ENCODE measurements at regions of chr7 and their contacts with region 1.

Region 1: DNA sequence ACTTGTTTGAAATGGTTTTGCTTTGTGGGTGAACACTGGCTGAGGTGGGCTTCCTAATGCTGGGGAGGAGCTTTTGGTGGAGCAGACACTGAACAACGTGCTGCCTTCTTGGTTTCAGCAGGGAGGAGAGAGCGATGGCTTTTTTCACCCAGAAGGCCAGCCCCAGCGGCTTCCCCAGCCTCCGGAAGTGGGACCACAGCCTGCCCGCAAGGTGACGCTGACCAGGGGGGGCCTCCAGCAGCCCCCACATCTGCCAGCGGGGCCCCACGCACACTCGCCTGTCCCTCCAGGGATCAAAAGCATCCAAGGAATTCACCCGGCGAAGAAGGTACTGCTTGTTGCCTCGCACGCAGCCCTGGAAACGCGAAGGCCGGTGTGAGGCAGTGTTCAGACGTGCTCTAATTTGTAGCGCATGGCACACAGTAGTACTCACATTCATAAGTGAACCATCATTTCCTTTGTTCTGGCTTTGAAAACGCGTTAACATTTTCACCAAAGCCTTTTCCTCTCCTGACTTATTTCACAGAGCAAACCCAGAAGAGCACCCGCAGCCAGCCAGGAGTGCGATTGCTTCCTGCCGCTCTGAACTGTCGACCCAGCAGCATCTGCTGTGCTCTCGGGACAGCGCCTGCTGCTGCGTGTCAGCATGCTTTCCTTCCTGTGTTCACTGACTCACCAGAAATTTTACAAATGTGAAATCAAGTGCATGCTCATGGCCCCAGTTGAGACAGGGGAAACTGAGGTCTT is 48.4 kb downstream of the SHH start:
- DNase-seq: no peak
- ATAC-seq: no peak
- H3K4me3 ChIP-seq: no peak overlapping the region
- H3K27ac ChIP-seq: no peak overlapping the region
- H3K4me1 ChIP-seq: no peaks in the 10 kb centered on the region
- H3K27me3 ChIP-seq: no peaks in the 10 kb centered on the region
- CTCF ChIP-seq: no peak

Region 2: DNA sequence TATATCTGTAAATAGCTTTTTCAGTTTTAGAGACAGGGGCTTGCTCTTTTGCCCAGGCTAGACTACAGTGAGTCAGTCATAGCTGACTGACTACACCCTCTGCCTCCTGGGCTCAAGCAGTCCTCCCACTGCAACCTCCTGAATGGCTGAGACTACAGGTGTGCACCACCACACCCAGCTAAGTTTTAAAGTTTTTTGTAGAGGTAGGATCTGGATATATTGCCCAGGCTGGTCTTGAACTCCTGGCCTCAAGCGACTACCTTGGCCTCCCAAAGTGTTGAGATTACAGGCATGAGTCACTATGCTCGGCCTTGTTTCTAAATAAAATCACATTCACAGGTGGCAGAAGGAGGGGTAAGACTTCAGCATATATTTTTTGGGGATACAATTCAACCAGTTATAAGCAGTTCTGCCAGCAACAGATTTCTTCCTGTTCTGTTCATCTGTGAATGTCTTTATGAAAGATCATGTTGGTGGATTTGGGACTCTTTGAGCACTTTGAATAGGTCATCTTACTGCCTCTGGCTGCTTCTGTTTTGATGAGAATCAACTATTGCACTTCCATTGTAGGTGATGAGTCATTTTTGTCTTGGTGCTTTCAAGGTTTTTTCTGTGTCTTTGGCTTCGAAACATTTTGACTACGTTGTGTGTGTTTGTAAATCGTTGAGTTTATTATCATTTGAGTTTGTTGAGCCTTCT is 103.7 kb before region 1 on chr7:
- CTCF ChIA-PET with region 1: no interaction called
- POLR2A ChIA-PET with region 1: no interaction called
- intact Hi-C with region 1: no loop called
- DNase-seq: no peak
- ATAC-seq: no peak
- H3K4me3 ChIP-seq: no peak overlapping the region
- H3K27ac ChIP-seq: no peak overlapping the region
- H3K4me1 ChIP-seq: peaks cover 7% of the 10 kb centered on the region
- H3K27me3 ChIP-seq: no peaks in the 10 kb centered on the region
- CTCF ChIP-seq: no peak

Region 3: DNA sequence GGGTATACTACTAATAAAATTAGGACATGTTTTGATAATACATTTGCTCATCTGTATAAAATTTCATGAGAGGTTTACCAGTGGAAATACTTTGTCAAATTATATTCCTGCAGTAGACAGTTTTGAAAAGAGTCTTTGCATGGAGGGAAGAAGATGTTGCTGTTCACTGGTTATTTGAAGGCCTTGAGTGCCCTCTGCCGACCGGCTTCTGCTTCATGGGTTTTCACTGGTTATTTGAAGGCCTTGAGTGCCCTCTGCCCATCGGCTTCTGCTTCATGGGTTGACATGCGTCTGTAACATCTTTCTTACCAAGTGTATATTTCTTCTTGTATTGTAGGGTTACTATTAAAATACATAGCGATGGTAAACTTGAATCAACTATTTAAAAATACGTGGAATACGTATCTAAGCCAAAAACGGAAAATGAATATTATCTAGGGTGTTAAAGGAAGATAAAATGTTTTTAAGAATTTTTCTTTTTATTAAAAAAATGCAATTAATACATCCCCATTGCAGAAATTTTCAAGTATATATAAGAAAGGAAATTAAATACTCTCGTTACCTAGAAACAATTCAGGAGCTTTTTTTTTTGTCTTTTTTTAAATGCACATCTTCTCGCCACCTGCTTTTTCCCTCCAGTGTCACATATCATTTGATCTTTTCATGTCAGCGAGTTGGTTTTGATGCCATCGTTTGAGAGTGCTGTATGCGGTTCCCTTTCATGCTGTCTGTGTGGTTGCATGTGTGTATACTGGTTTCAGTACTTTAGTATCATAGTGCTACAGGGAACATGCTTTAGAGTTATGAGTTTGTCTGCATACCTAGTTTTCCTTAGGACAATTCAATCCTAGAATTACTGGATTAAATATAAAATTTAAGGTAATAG is 25.0 kb before region 1 on chr7:
- CTCF ChIA-PET with region 1: no interaction called
- POLR2A ChIA-PET with region 1: no interaction called
- intact Hi-C with region 1: loop called (anchors 1 kb)
- DNase-seq: peak; percentile 74
- ATAC-seq: peak; percentile 98
- H3K4me3 ChIP-seq: no peak overlapping the region
- H3K27ac ChIP-seq: no peak overlapping the region
- H3K4me1 ChIP-seq: no peaks in the 10 kb centered on the region
- H3K27me3 ChIP-seq: no peaks in the 10 kb centered on the region
- CTCF ChIP-seq: peak; percentile 78

Measured in PC-3 (cell line).